ENCODE measurements at regions of chr14 and their contacts with region 1.

Region 1: DNA sequence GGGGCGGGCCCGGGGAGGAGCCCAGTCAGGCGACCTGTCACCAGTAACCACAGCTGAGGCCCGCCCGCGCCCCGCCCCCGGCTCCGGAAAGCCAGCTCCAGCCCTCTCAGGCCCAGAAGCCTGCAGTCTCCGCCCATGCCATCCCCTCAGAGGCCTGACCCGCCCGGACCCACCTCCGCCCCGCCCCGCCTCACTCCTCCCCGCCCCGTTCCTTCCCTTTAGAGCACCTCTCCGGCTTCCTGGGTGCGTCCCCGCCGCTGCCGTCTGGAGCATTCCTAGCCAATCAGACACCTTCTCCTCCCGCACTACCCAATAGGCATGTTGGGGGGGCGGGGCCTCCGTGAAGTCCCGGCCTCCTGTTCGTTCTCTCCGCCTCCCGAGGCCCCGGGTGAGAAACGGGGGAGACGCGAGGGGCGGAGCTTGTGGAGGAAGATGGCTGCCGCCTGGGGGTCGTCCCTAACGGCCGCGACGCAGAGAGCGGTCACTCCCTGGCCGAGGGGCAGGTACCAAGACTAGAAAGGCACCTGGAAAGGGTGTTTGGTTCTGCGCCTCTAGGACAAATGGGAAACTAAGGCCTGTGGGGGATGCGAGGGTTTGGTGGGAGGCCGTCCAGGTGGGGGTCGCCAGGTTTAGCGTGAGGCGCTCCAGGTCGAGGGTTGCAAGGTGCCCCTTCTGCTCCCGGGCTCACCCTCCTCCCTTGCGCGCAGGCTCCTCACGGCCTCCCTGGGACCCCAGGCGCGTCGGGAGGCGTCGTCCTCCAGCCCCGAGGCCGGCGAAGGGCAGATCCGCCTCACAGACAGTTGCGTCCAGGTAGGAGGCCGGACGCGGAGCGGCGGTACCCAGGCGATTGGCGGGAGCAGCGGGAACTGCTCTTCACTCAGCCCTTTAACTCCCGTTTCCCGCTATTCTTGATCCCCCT is at the start of gene ISCA2:
- DNase-seq: peak; percentile 97 to 100 (median 99)
- ATAC-seq: peak; percentile 91
- H3K4me3 ChIP-seq: peak within 1 kb of the TSS; percentile 78 to 90
- H3K4me3 Mint-ChIP-seq: no peak within 1 kb of the TSS
- H3K27ac ChIP-seq: peak within 1 kb of the TSS; percentile 80 to 81
- H3K27ac Mint-ChIP-seq: peak within 1 kb of the TSS; percentile 92
- H3K4me1 ChIP-seq: peaks cover 32% of the 10 kb centered on the region
- H3K4me1 Mint-ChIP-seq: peaks cover 33% of the 10 kb centered on the region
- H3K27me3 ChIP-seq: no peaks in the 10 kb centered on the region
- H3K27me3 Mint-ChIP-seq: no peaks in the 10 kb centered on the region
- CTCF ChIP-seq: no peak
- total RNA-seq, gene ISCA2: 18.6 to 24.0 TPM

Region 2: GRCh38 chr14:73458151-73458976 is 1035.2 kb before region 1 on chr14 and contains the start of gene NUMB:
- CTCF ChIA-PET with region 1: no interaction called
- POLR2A ChIA-PET with region 1: no interaction called
- intact Hi-C with region 1: loop called in 1 of 2 experiments (anchors 5 kb)
- DNase-seq: peak; percentile 90 to 99 (median 95)
- ATAC-seq: peak; percentile 96
- H3K4me3 ChIP-seq: peak within 1 kb of the TSS; percentile 67 to 98
- H3K4me3 Mint-ChIP-seq: peak within 1 kb of the TSS; percentile 100
- H3K27ac ChIP-seq: peak within 1 kb of the TSS; percentile 49 to 64
- H3K27ac Mint-ChIP-seq: peak within 1 kb of the TSS; percentile 97
- H3K4me1 ChIP-seq: peaks cover 27% of the 10 kb centered on the region
- H3K4me1 Mint-ChIP-seq: peaks cover 41% of the 10 kb centered on the region
- H3K27me3 ChIP-seq: no peaks in the 10 kb centered on the region
- H3K27me3 Mint-ChIP-seq: no peaks in the 10 kb centered on the region
- CTCF ChIP-seq: no peak
- total RNA-seq, gene NUMB: 21.8 to 22.0 TPM

Region 3: DNA sequence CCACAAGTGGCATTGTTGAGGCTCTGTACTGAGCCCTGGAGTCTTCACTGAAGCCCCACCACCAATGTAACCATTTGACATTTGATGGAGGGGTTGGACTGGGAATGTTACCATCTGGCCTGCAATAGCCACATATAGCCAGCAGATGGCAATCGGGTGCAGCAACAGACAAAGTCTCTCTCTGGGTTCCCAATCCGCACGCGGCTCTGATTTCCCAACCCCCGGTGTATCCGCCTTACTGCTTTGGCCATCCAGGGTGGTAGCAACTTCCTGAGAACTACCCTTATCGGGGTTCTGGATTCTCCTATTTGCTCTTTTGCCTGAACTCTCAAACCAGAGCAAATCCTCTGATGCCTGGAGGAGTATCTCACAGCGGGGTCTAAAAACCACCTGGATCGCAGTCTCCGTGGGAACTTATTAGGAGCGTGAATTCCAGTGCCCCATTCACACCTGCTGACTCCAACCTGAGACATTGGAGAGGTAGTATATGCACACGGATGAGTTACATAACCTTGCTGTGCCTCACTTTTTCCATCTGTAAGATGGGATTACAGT is 131.2 kb before region 1 on chr14:
- CTCF ChIA-PET with region 1: no interaction called
- POLR2A ChIA-PET with region 1: no interaction called
- intact Hi-C with region 1: loop called in 1 of 2 experiments (anchors 1 kb)
- DNase-seq: peak; percentile 28 to 78 (median 65)
- ATAC-seq: peak; percentile 75
- H3K4me3 ChIP-seq: no peak overlapping the region
- H3K4me3 Mint-ChIP-seq: no peak overlapping the region
- H3K27ac ChIP-seq: no peak overlapping the region
- H3K27ac Mint-ChIP-seq: no peak overlapping the region
- H3K4me1 ChIP-seq: peaks cover 3% of the 10 kb centered on the region
- H3K4me1 Mint-ChIP-seq: no peaks in the 10 kb centered on the region
- H3K27me3 ChIP-seq: no peaks in the 10 kb centered on the region
- H3K27me3 Mint-ChIP-seq: peaks cover 8% of the 10 kb centered on the region
- CTCF ChIP-seq: peak; percentile 94

Region 4: DNA sequence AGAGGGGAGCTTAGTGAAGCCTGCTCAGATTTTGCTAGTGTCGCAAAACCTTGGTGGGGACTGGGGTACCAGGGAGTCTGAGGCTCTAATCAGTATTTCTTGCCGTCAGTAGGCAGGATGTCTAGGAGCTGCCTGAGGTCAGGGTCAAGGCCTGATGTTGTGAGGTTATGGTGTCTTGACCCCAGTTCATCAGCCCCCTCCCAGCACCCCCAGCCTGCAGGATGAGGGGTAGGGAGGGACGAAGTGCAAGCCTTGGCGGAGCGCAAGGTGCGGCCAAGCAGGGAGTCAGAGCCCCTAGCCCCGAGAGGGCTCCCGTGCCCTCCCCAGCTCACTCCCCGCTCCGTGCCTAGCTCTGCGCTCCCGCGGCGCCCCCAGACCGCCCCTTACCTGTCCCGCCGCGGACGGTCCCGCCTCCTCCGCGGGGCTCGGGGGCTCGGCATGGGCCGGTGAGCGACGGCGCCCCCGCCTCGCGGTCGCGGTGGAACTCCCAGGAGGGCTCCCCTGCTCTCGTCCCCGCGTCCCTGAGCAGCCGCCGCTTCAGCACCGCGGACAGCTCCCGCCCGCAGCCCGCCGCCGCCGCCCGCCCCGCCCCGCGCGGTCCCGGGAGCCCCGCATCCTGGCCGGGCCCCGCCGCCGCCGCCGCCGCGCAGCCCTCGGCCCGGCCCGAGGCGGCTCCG is 67.9 kb before region 1 on chr14:
- CTCF ChIA-PET with region 1: no interaction called
- POLR2A ChIA-PET with region 1: no interaction called
- intact Hi-C with region 1: no loop called
- DNase-seq: peak in 8 of 9 experiments; percentile 37 to 74 (median 59)
- ATAC-seq: peak; percentile 89
- H3K4me3 ChIP-seq: no peak overlapping the region
- H3K4me3 Mint-ChIP-seq: no peak overlapping the region
- H3K27ac ChIP-seq: no peak overlapping the region
- H3K27ac Mint-ChIP-seq: no peak overlapping the region
- H3K4me1 ChIP-seq: peaks cover 5% of the 10 kb centered on the region
- H3K4me1 Mint-ChIP-seq: peaks cover 2% of the 10 kb centered on the region
- H3K27me3 ChIP-seq: peaks cover 11 to 12% of the 10 kb centered on the region in 2 experiments
- H3K27me3 Mint-ChIP-seq: peaks cover 55% of the 10 kb centered on the region
- CTCF ChIP-seq: no peak

Region 5: DNA sequence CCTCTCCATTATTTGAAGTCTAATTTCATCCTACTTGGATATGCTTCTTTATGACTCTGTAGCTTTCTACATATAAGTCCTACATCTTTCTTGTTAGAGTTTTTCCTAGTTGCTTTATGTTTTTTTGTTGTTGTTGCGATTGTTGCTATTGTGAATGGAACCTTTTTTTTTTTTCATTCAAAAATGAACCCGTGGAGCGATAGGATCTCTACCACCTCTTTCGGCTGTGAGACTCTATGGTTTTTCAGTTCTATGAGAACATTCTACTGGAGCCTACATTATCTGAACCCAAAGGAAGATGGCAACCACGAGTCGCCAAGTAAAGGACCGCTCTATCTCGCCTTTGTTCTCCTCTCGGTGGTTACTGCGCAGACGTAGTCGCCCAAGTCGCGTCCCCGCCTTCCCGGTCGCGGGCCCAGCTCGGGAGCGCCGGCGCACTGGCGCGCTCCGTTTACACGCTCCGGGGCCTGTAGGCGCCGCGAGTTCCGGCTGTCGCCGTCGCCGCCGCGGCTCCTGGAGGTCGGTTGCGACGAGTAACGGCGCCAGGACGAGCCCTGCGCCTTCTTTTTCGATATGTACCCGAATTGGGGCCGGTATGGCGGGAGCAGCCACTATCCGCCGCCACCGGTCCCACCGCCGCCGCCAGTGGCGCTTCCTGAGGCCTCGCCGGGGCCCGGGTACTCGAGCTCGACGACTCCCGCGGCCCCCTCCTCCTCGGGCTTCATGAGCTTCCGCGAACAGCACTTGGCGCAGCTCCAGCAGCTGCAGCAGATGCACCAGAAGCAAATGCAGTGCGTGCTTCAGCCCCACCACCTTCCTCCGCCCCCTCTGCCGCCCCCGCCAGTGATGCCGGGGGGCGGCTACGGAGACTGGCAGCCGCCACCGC is 269.6 kb after region 1 on chr14 and contains the start of gene YLPM1:
- CTCF ChIA-PET with region 1: no interaction called
- POLR2A ChIA-PET with region 1: no interaction called
- intact Hi-C with region 1: loop called (anchors 2 kb)
- DNase-seq: peak; percentile 88 to 98 (median 91)
- ATAC-seq: peak; percentile 93
- H3K4me3 ChIP-seq: peak within 1 kb of the TSS; percentile 90 to 95
- H3K4me3 Mint-ChIP-seq: peak within 1 kb of the TSS; percentile 86
- H3K27ac ChIP-seq: peak within 1 kb of the TSS; percentile 68 to 98
- H3K27ac Mint-ChIP-seq: peak within 1 kb of the TSS; percentile 93
- H3K4me1 ChIP-seq: peaks cover 43% of the 10 kb centered on the region
- H3K4me1 Mint-ChIP-seq: peaks cover 51% of the 10 kb centered on the region
- H3K27me3 ChIP-seq: no peaks in the 10 kb centered on the region
- H3K27me3 Mint-ChIP-seq: no peaks in the 10 kb centered on the region
- CTCF ChIP-seq: peak; percentile 41
- total RNA-seq, gene YLPM1: 77.3 to 78.8 TPM

Region 6: GRCh38 chr14:75050852-75051554 is 557.4 kb after region 1 on chr14 and contains the start of gene MLH3:
- CTCF ChIA-PET with region 1: no interaction called
- POLR2A ChIA-PET with region 1: no interaction called
- intact Hi-C with region 1: loop called in 1 of 2 experiments (anchors 5 kb)
- DNase-seq: peak; percentile 65 to 92 (median 81)
- ATAC-seq: peak; percentile 80
- H3K4me3 ChIP-seq: peak within 1 kb of the TSS; percentile 67 to 85
- H3K4me3 Mint-ChIP-seq: peak within 1 kb of the TSS; percentile 94
- H3K27ac ChIP-seq: peak within 1 kb of the TSS; percentile 62 to 77
- H3K27ac Mint-ChIP-seq: peak within 1 kb of the TSS; percentile 96
- H3K4me1 ChIP-seq: peaks cover 15% of the 10 kb centered on the region
- H3K4me1 Mint-ChIP-seq: peaks cover 45% of the 10 kb centered on the region
- H3K27me3 ChIP-seq: no peaks in the 10 kb centered on the region
- H3K27me3 Mint-ChIP-seq: no peaks in the 10 kb centered on the region
- CTCF ChIP-seq: no peak
- total RNA-seq, gene MLH3: 8.5 to 12.2 TPM

Region 7: GRCh38 chr14:75946785-75947184 is 1453.2 kb after region 1 on chr14:
- CTCF ChIA-PET with region 1: no interaction called
- POLR2A ChIA-PET with region 1: no interaction called
- intact Hi-C with region 1: no loop called
- DNase-seq: no peak
- ATAC-seq: no peak
- H3K4me3 ChIP-seq: no peak overlapping the region
- H3K4me3 Mint-ChIP-seq: no peak overlapping the region
- H3K27ac ChIP-seq: no peak overlapping the region
- H3K27ac Mint-ChIP-seq: no peak overlapping the region
- H3K4me1 ChIP-seq: no peaks in the 10 kb centered on the region
- H3K4me1 Mint-ChIP-seq: no peaks in the 10 kb centered on the region
- H3K27me3 ChIP-seq: no peaks in the 10 kb centered on the region
- H3K27me3 Mint-ChIP-seq: no peaks in the 10 kb centered on the region
- CTCF ChIP-seq: no peak

Region 8: GRCh38 chr14:75982266-75983018 is 1488.8 kb after region 1 on chr14:
- CTCF ChIA-PET with region 1: no interaction called
- POLR2A ChIA-PET with region 1: no interaction called
- intact Hi-C with region 1: loop called in 1 of 2 experiments (anchors 5 kb)
- DNase-seq: peak; percentile 57 to 87 (median 77)
- ATAC-seq: peak; percentile 59
- H3K4me3 ChIP-seq: peak overlapping the region; percentile 59 to 87
- H3K4me3 Mint-ChIP-seq: peak overlapping the region; percentile 82
- H3K27ac ChIP-seq: peak overlapping the region; percentile 64 to 75
- H3K27ac Mint-ChIP-seq: peak overlapping the region; percentile 86
- H3K4me1 ChIP-seq: peaks cover 33% of the 10 kb centered on the region
- H3K4me1 Mint-ChIP-seq: peaks cover 57% of the 10 kb centered on the region
- H3K27me3 ChIP-seq: no peaks in the 10 kb centered on the region
- H3K27me3 Mint-ChIP-seq: no peaks in the 10 kb centered on the region
- CTCF ChIP-seq: peak; percentile 48

Measured in CD8-positive, alpha-beta T cell (primary cell).